Activated T-helper 2 cell treated with anti-CD3 and anti-CD28 coated beads, Interferon-gamma antibody, Interleukin-2, Interleukin-4, amounts not matched to agents 10 μg/mL and 5 μg/mL and 100 μg/mL, durations not matched to agents 14 hours and 24 hours and 36 hours (primary cell): ENCODE measurements at regions of chr9 and their contacts with region 1.

Region 1: DNA sequence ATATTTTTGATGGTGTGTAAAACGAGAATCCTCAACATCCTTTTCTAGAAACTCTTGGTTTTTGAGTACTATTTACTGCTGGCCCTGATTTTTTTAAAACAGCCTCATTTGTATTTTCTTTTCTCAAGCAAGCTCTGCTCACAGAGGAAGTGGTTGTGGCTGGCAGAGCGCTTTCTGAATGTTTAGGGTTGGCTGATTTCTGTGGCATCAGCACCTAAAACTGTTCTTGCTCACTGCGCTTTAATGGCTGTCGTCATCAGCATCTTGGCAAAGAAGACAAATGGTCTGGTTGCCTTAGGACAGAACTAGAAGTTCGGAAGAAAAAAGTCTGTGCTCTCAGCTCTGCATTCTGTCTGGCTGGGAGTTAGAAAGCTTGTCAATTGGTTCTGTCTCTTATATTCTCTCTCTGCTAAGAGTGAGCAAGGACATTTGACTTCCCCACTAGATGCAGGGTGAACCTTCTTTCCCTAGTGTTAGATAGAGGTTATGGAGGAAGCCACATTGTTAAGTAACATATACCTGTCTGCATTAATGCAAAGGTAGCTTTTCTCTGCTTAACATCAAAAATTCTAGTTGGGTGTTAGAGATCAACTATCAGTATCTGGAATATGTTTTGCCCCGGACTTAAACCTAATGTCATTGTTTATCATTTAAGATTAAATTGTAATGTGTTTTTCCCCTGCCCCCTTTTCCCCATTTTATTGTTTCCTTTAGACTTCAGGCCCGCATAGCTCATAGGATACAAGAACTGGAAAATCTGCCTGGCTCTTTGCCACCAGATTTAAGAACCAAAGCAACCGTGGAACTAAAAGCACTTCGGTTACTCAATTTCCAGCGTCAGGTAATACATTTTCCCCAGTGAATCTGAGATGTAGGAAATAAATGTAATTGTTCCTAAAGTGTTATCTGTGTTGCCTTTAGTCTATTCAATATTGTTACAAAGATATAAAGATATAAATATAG is 39.0 kb downstream of the SMARCA2 start:
- DNase-seq: peak; percentile 71
- H3K4me3 Mint-ChIP-seq: peak overlapping the region; percentile 15
- H3K27ac Mint-ChIP-seq: peak overlapping the region; percentile 24
- H3K4me1 Mint-ChIP-seq: peaks cover 31% of the 10 kb centered on the region
- H3K27me3 Mint-ChIP-seq: no peaks in the 10 kb centered on the region

Region 2: DNA sequence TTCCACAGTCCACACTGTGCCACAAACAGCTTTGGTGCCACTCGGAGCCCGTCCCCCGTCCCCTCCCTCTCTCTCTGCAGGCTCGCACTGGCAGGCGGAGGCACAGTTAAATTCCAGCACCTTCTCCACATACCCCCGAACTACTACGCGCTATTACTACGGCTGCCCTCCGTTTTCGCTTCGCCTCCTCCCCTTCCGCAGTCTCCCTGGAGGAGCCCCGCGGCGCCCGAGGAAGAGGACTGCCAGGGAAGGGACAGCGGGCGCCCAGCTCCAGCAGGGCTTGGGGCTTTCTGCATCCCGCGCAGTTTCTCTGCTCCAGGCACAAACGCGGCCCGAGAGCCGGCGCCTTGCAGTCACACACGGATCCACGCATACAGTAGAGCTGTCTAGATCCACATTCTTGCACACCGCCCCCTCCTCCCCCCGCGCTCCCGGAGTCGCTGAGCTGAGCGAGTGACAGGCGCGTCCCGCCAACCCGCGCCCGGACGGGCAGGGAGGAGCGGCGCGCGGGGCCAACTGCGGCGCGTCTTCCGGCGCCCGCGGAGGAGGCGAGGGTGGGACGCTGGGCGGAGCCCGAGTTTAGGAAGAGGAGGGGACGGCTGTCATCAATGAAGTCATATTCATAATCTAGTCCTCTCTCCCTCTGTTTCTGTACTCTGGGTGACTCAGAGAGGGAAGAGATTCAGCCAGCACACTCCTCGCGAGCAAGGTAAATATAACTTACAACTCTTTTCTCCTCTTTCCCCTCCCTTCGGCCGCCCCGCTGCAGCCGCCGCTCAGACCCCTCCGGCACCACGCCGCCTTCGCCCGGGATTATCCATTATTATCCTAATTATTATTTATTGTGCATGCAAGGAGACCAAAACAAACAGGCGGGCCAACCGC is 39.2 kb before region 1 on chr9 and contains the start of gene SMARCA2:
- intact Hi-C with region 1: loop called (anchors 2 kb)
- DNase-seq: peak; percentile 97
- H3K4me3 Mint-ChIP-seq: peak within 1 kb of the TSS; percentile 98
- H3K27ac Mint-ChIP-seq: peak within 1 kb of the TSS; percentile 99
- H3K4me1 Mint-ChIP-seq: peaks cover 39% of the 10 kb centered on the region
- H3K27me3 Mint-ChIP-seq: peaks cover 9% of the 10 kb centered on the region
- total RNA-seq, gene SMARCA2: 84.5 and 90.4 TPM in 2 replicates

Region 3: GRCh38 chr9:2023532-2023931 is 30.6 kb before region 1 on chr9:
- intact Hi-C with region 1: loop called (anchors 1 kb)
- DNase-seq: peak; percentile 21
- H3K4me3 Mint-ChIP-seq: peak overlapping the region; percentile 71
- H3K27ac Mint-ChIP-seq: peak overlapping the region; percentile 90
- H3K4me1 Mint-ChIP-seq: peaks cover 93% of the 10 kb centered on the region
- H3K27me3 Mint-ChIP-seq: no peaks in the 10 kb centered on the region

Region 4: DNA sequence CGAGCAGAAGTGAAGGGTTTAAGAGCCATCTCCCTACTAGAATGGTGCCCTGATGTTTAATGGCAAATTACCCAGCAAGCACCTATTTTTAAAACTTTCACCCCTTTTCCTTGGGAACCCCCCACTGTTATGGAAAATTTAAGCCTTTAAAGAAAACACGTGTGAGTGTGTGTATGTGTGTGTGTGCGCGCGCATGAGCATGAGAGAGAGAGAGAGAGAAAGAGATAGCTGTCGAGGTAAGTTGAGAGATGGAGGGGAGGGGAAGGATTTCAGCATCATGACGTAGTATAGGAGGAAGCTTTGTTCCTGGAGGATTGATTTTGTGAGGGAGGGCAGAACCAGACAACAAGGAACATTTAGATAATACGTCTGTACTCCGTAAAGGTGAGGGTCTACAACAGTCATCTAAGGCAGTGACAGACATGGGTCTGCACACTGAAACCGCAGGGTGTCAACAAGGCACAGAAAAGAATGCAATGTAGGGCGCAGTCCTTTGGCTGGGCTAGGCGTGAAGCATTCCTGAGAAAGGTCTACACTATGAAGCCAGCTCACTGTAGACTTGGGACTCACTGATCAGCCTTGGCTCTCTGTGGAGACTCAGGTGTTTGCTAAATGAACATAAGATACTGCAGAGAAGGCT is 188.7 kb after region 1 on chr9:
- intact Hi-C with region 1: no loop called
- DNase-seq: no peak
- H3K4me3 Mint-ChIP-seq: peak overlapping the region; percentile 76
- H3K27ac Mint-ChIP-seq: no peak overlapping the region
- H3K4me1 Mint-ChIP-seq: peaks cover 11% of the 10 kb centered on the region
- H3K27me3 Mint-ChIP-seq: peaks cover 32% of the 10 kb centered on the region

Region 5: GRCh38 chr9:2524601-2525000 is 470.4 kb after region 1 on chr9:
- intact Hi-C with region 1: no loop called
- DNase-seq: no peak
- H3K4me3 Mint-ChIP-seq: no peak overlapping the region
- H3K27ac Mint-ChIP-seq: no peak overlapping the region
- H3K4me1 Mint-ChIP-seq: no peaks in the 10 kb centered on the region
- H3K27me3 Mint-ChIP-seq: no peaks in the 10 kb centered on the region